ENCODE measurements at regions of chr14 and their contacts with region 1.

Region 1: DNA sequence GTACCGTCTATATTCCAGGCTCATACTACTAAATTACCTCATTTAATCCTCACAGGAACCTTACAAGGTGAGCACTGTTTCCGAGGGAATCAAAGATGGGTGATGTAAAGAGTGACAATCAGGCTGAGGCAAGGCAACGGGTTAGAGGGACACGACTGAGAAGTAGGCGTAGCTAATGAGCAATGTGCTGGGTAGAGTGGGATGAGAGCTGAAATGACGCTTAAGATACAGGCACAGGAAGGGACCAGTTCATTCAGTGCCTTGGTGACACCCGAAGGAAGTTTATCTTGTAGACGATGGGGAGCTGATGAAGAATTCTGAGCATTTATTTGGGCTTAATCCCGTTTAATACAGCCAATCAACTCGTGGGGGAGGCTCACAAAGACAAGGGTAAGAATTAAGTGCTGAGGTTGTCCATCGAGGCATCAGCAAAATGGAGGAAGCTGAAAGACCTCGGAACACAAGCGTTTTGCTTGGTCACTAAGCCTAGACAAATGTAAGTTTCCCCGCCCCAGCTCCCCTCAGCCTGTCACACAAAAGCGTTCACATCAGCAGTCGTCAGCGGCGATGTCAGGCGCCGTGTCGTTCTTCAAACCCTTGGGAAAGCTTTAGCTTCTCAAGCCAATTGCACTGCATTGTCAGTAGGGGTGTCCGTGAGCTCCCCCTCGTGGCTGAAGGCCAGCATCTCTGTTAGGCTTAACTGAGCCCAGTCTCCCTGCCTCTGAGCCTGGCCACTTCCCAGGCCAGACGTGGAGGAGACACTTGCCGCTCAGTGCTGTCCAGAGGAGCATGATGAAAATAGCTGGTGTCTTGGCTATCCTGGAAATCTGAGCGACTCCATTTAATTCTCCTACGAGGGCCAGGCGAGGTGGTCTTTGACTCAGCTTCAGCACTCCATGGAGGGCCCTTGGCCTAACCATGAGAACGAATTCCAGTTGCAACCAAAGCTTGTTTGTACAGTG is 288.5 kb upstream of the G2E3 start:
- DNase-seq: peak; percentile 80 to 93
- H3K4me3 ChIP-seq: peak overlapping the region; percentile 16 to 47 (median 32); a peak in 6 of 8 replicates
- H3K27ac ChIP-seq: no peak overlapping the region
- H3K4me1 ChIP-seq: peaks cover 0 to 5% (median 1%) of the 10 kb centered on the region in 4 experiments; a peak in 1 of 7 replicates
- H3K27me3 ChIP-seq: peaks cover 0 to 3% (median 1%) of the 10 kb centered on the region in 4 experiments; a peak in 3 of 7 replicates
- CTCF ChIP-seq: peak; percentile 84 to 98 (median 92)
- EP300 ChIP-seq: no peak
- POLR2A ChIP-seq: no peak
- RAD21 ChIP-seq: peak; percentile 67 to 78

Region 2: GRCh38 chr14:30223385-30223813 is 47.1 kb before region 1 on chr14:
- CTCF ChIA-PET with region 1: interaction called, 11 read pairs
- POLR2A ChIA-PET with region 1: no interaction called
- DNase-seq: no peak
- H3K4me3 ChIP-seq: no peak overlapping the region
- H3K27ac ChIP-seq: no peak overlapping the region
- H3K4me1 ChIP-seq: no peaks in the 10 kb centered on the region
- H3K27me3 ChIP-seq: no peaks in the 10 kb centered on the region
- CTCF ChIP-seq: no peak
- EP300 ChIP-seq: no peak
- POLR2A ChIP-seq: no peak
- RAD21 ChIP-seq: no peak

Region 3: DNA sequence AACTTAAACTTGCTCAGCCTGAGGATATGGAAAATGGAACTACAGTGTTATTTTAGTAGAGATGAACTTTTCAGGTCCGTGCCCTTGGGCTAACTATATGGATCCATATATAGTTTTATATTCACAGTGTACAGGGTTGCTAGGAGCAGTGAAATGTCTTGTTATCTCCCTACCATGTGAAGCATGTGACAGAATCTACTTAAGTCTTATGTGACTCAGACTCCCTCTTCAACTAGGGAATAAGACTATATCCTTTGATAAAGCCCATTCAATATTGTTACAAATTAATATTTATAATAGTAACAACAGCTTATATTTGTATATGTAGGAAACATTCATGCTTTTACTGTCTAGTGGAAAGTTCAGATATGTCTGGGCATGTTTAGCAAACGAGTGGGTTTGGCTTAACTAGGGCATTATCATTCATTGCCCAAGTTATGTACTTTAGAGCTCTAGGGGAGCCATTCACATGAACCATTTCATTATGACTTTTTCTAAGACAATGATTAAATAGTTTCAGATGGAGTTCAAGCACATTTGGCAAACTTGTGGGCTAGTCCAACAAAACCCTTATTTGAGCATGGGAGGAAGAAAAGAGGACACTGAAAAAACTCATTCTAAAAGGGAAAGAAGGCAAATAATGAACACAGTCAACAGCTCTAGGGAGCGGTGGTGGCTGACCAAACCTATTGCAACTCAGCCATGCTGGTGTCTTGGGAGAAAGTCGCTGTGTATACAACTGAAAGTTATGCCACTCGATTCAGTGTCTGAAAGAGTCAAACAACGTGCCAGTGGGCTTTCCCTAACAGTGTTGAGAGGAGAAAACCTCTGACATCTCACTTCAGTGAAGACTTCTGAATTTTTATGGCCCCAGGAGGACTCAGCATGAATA is 17.5 kb before region 1 on chr14:
- CTCF ChIA-PET with region 1: interaction called, 20 read pairs
- POLR2A ChIA-PET with region 1: no interaction called
- DNase-seq: no peak
- H3K4me3 ChIP-seq: no peak overlapping the region
- H3K27ac ChIP-seq: no peak overlapping the region
- H3K4me1 ChIP-seq: peaks cover 0 to 6% (median 0%) of the 10 kb centered on the region in 4 experiments; a peak in 2 of 7 replicates
- H3K27me3 ChIP-seq: no peaks in the 10 kb centered on the region
- CTCF ChIP-seq: no peak
- EP300 ChIP-seq: no peak
- POLR2A ChIP-seq: no peak
- RAD21 ChIP-seq: no peak

Region 4: DNA sequence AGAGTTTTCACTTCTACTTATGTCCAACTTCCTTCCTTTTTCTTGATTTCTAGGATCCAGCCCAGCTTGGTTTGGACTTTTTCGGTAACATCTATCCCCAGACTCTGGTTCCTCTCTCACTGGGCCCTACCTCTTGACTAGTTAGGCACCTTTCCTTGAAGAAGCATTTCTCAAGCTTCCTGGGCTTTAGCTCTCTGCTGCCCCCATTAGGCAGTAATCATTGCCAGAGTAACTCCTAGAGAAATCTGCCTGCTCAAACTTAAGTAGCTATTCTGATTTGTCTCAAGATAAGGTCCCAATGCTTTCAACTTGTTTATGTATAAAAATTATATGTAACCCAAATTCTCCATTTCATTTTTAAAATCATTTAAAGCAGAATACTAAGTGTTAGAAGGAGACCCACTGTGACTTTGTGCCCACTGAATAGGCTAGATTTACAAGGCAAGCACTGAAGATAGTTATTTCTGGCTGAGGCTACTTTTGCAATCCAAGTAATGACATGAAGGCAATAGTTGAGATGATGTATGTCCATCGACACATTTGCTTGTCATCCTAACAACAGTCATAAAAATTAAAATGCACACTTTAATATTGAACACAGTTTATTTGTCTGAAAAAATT is 13.5 kb after region 1 on chr14:
- CTCF ChIA-PET with region 1: interaction called, 47 read pairs
- POLR2A ChIA-PET with region 1: interaction called, 4 read pairs
- DNase-seq: peak; percentile 34 to 77
- H3K4me3 ChIP-seq: no peak overlapping the region
- H3K27ac ChIP-seq: no peak overlapping the region
- H3K4me1 ChIP-seq: no peaks in the 10 kb centered on the region
- H3K27me3 ChIP-seq: no peaks in the 10 kb centered on the region
- CTCF ChIP-seq: peak in 2 of 3 experiments; percentile 73 to 80; a peak in 3 of 4 replicates
- EP300 ChIP-seq: no peak
- POLR2A ChIP-seq: no peak
- RAD21 ChIP-seq: peak; percentile 62 to 70

Region 5: DNA sequence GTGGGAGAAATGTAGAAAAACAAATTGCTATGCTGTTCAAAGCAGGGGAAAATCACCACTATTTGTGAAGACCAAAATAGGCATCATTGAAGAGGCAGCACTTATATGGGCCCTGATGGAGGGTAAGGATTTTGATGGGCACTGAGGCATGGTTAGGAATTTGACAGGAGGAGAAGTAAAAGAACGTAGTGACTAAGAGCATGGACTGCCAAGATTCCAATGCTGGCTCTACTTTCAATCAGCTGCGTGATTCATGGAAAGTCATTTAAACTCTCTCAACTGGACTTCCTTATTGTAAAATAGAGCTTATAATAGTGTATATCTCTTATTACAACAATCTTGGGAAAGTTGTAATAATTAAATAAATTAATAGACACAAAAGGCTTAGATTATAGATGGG is 20.7 kb after region 1 on chr14:
- CTCF ChIA-PET with region 1: interaction called, 16 read pairs
- POLR2A ChIA-PET with region 1: no interaction called
- DNase-seq: no peak
- H3K4me3 ChIP-seq: no peak overlapping the region
- H3K27ac ChIP-seq: no peak overlapping the region
- H3K4me1 ChIP-seq: no peaks in the 10 kb centered on the region
- H3K27me3 ChIP-seq: no peaks in the 10 kb centered on the region
- CTCF ChIP-seq: no peak
- EP300 ChIP-seq: no peak
- POLR2A ChIP-seq: no peak
- RAD21 ChIP-seq: no peak

Region 6: DNA sequence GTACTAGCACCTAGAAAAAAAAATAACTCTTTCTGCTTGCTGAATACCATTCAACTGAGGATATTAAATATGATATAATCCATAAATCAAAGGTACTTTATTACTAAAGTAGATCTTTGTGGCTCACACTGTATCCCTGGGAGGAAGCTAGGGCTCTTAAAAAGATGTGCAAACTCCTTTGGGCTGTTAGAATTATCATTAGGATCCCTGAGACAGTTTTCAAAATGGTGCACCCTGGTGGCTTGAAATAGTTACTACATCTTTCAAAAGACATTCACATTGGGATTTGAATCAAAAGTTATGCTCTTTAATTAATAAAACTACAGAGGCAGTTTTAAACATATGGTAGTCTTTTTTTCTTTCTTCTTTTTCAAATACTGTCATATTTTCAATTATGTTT is 60.0 kb after region 1 on chr14:
- CTCF ChIA-PET with region 1: interaction called, 10 read pairs
- POLR2A ChIA-PET with region 1: no interaction called
- DNase-seq: no peak
- H3K4me3 ChIP-seq: no peak overlapping the region
- H3K27ac ChIP-seq: no peak overlapping the region
- H3K4me1 ChIP-seq: no peaks in the 10 kb centered on the region
- H3K27me3 ChIP-seq: no peaks in the 10 kb centered on the region
- CTCF ChIP-seq: peak in 2 of 3 experiments; percentile 10 to 38; a peak in 2 of 4 replicates
- EP300 ChIP-seq: no peak
- POLR2A ChIP-seq: no peak
- RAD21 ChIP-seq: peak in 1 of 2 experiments; percentile 23; a peak in 1 of 4 replicates

Region 7: DNA sequence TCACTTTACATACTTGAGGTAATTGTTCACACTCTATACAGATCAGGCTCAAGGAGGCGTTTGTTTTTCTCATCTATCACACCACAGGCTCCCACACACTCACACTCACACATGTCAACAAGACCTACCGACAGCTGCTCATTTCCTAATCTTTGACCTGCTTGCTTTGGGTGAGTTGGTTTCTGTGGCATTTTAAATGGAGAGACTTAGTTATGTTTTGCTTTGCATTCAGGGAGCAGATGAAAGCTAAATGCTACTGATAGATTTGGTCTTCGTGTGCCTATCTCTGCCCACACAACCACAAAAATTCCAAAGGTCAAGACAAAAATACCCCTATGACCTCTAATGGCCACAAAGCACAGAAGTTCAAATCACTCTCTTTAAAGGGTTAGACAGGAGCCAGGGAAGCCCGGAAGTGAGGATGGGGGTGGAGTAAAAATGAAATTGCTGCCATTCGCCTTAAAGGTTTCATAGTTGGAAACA is 85.0 kb after region 1 on chr14:
- CTCF ChIA-PET with region 1: no interaction called
- POLR2A ChIA-PET with region 1: no interaction called
- DNase-seq: no peak
- H3K4me3 ChIP-seq: no peak overlapping the region
- H3K27ac ChIP-seq: no peak overlapping the region
- H3K4me1 ChIP-seq: peaks cover 0 to 2% (median 0%) of the 10 kb centered on the region in 4 experiments; a peak in 1 of 7 replicates
- H3K27me3 ChIP-seq: no peaks in the 10 kb centered on the region
- CTCF ChIP-seq: no peak
- EP300 ChIP-seq: no peak
- POLR2A ChIP-seq: no peak
- RAD21 ChIP-seq: no peak

Region 8: DNA sequence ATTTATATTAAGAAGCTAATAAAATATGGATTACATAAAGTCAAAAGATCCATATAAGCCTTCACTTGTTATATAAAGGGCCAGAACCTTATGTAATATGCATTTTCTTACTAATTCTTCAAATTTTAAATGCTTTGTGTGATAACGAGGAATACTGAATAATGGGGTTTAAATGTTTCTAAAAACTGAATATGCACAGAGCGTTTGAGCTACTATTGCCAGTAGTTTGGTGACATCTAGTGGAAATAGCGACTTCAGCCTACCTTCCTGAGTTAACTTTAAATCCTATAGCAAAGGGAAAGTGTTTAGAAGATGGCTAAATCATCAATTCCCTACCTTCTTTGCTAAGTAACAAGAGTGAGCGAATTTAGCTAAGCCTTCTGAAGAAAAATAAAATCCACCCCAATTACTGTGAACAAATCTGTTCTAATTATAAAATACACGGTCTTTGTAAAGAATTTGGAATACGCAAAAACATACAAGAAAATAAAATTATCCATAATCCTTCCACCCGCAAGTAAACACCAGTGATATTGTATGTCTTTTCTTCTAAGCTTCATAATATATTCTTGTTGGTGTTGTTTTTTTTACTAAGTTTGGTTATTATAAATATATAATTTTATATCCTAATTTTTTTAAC is 173.0 kb after region 1 on chr14:
- CTCF ChIA-PET with region 1: interaction called, 15 read pairs
- POLR2A ChIA-PET with region 1: no interaction called
- DNase-seq: no peak
- H3K4me3 ChIP-seq: no peak overlapping the region
- H3K27ac ChIP-seq: no peak overlapping the region
- H3K4me1 ChIP-seq: peaks cover 0 to 5% (median 2%) of the 10 kb centered on the region in 4 experiments; a peak in 2 of 7 replicates
- H3K27me3 ChIP-seq: no peaks in the 10 kb centered on the region
- CTCF ChIP-seq: peak in 2 of 3 experiments; percentile 66 to 72; a peak in 3 of 4 replicates
- EP300 ChIP-seq: no peak
- POLR2A ChIP-seq: no peak
- RAD21 ChIP-seq: peak; percentile 95